Natural killer cell (primary cell): ENCODE measurements at regions of chr11 and their contacts with region 1.

Region 1: DNA sequence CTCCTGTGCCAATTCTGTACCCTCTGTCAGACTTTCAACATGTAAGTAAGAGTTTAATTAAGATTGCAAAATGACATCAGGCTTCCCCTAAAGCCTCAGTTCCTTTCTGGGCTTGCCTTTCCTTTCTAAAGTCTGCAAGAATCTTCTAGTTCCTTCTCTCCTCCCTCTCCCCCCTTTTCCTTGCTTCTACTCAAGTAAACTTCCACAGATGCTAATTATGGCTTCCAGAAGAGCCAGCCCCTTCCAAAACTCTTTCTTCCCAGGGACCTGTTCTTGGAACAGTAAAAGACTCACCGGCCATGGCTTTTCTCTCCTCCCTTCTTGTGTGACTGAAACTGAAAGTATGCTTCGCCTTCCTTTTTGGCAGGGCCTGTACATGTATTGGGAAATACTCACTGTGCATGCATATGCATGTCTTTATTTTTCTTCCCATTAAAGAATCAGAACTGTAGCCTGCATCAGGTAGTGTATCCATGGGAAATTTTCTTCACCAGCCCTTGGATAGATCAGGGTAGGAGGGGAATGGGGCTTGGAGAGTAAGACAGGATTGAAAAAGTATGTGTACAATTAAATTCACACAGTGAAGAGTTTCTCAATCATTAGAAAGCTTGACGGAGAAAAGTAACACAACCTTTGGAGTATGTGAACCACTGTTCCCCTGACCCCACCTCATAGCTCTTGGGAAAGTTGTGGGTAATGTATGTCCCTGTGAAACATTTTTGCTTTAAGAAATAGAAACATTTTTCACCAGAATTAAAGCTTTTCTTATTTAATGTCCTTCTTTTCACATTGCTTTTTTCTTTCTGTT is at the start of gene CASP1:
- DNase-seq: peak in 1 of 2 donors; percentile 67
- ATAC-seq: peak; percentile 83 to 85 (median 85)
- H3K4me3 ChIP-seq: peak within 1 kb of the TSS; percentile 72
- H3K4me3 Mint-ChIP-seq: peak within 1 kb of the TSS; percentile 92
- H3K27ac ChIP-seq: peak within 1 kb of the TSS; percentile 85
- H3K27ac Mint-ChIP-seq: peak within 1 kb of the TSS; percentile 87 to 92
- H3K4me1 ChIP-seq: peaks cover 8% of the 10 kb centered on the region
- H3K4me1 Mint-ChIP-seq: peaks cover 48 to 51% of the 10 kb centered on the region in 2 donors
- H3K27me3 ChIP-seq: no peaks in the 10 kb centered on the region
- H3K27me3 Mint-ChIP-seq: no peaks in the 10 kb centered on the region
- CTCF ChIP-seq: no peak
- total RNA-seq, gene CASP1: 89.3 to 117 (median 93.8) TPM

Region 2: GRCh38 chr11:104968355-104968855 is 66.6 kb before region 1 on chr11 and contains the start of gene CASP4:
- intact Hi-C with region 1: loop called (anchors 5 kb)
- DNase-seq: peak in 1 of 2 donors; percentile 71
- ATAC-seq: peak; percentile 83 to 87 (median 87)
- H3K4me3 ChIP-seq: peak within 1 kb of the TSS; percentile 81
- H3K4me3 Mint-ChIP-seq: peak within 1 kb of the TSS; percentile 96
- H3K27ac ChIP-seq: peak within 1 kb of the TSS; percentile 93
- H3K27ac Mint-ChIP-seq: peak within 1 kb of the TSS; percentile 97 to 98
- H3K4me1 ChIP-seq: peaks cover 22% of the 10 kb centered on the region
- H3K4me1 Mint-ChIP-seq: peaks cover 48 to 51% of the 10 kb centered on the region in 2 donors
- H3K27me3 ChIP-seq: no peaks in the 10 kb centered on the region
- H3K27me3 Mint-ChIP-seq: no peaks in the 10 kb centered on the region
- CTCF ChIP-seq: no peak
- total RNA-seq, gene CASP4: 132 to 156 (median 149) TPM

Region 3: GRCh38 chr11:105071089-105071732 is 36.2 kb after region 1 on chr11:
- intact Hi-C with region 1: no loop called
- DNase-seq: peak in 1 of 2 donors; percentile 51
- ATAC-seq: no peak
- H3K4me3 ChIP-seq: no peak overlapping the region
- H3K4me3 Mint-ChIP-seq: peak overlapping the region; percentile 10
- H3K27ac ChIP-seq: no peak overlapping the region
- H3K27ac Mint-ChIP-seq: no peak overlapping the region
- H3K4me1 ChIP-seq: no peaks in the 10 kb centered on the region
- H3K4me1 Mint-ChIP-seq: peaks cover 6% of the 10 kb centered on the region in 2 donors
- H3K27me3 ChIP-seq: no peaks in the 10 kb centered on the region
- H3K27me3 Mint-ChIP-seq: peaks cover 0 to 9% of the 10 kb centered on the region in 2 donors
- CTCF ChIP-seq: no peak